ENCODE measurements at regions of chr1 and their contacts with region 1.

Region 1: GRCh38 chr1:244918421-244919319 is 54.3 kb upstream of the HNRNPU start:
- DNase-seq: peak; percentile 26 to 73 (median 51)
- ATAC-seq: peak in 3 of 4 donors; percentile 88 to 93 (median 92)
- H3K4me3 ChIP-seq: peak overlapping the region; percentile 31 to 67 (median 58)
- H3K27ac ChIP-seq: peak overlapping the region in 10 of 12 donors; percentile 21 to 78 (median 52)
- H3K4me1 ChIP-seq: peaks cover 0 to 22% (median 12%) of the 10 kb centered on the region in 12 donors
- H3K27me3 ChIP-seq: no peaks in the 10 kb centered on the region
- CTCF ChIP-seq: peak in 7 of 12 donors; percentile 6 to 44 (median 18)
- POLR2A ChIP-seq: no peak

Region 2: DNA sequence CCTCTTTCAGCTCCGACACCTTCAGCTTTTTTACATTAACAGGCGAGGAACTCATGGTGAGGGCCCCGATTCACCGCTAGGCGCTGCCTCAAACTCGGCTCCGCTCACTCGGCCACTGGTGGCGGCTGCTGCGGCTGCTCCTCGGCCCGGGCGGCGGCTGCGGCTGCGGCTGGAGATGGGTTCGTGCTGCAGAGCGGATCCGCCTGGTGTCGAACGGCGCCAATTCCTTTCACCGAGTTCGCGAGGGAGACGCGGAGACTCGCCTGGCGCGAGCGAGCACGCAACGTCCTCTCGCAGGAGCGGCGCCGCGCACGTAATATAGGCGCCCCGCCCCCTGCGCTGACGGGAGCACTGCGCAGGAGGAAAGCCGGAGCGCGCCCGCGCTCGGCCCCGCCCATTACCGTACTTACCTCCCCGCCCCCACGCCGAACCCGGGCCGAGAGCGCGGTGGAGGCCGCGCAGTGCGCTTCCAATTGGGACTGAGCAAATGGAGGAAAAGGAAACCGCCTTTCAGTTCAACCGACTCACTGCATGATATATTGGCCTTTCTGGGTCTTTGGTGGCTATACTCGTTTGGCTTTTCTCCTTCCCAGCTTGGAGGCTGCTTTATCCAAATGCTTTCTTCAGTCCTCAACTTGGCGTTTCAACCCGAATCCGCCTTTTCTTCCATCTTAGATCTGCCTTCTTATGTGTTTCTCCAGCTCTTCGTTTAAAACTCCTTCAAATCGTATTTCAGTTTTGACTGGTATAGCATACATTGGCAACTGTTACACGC is 54.2 kb before region 1 on chr1 and contains the start of gene HNRNPU:
- intact Hi-C with region 1: loop called in 4 of 10 experiments (anchors 5 kb)
- DNase-seq: peak; percentile 97 to 99 (median 98)
- ATAC-seq: peak; percentile 89 to 96 (median 93)
- H3K4me3 ChIP-seq: peak within 1 kb of the TSS; percentile 88 to 100 (median 96)
- H3K27ac ChIP-seq: peak within 1 kb of the TSS; percentile 94 to 100 (median 100)
- H3K4me1 ChIP-seq: peaks cover 5 to 47% (median 40%) of the 10 kb centered on the region in 12 donors
- H3K27me3 ChIP-seq: no peaks in the 10 kb centered on the region
- CTCF ChIP-seq: peak in 7 of 12 donors; percentile 5 to 38 (median 32)
- POLR2A ChIP-seq: peak; percentile 75 to 97
- total RNA-seq, gene HNRNPU: 138 to 218 (median 169) TPM

Region 3: GRCh38 chr1:244874974-244875579 is 43.6 kb before region 1 on chr1:
- intact Hi-C with region 1: loop called in 1 of 10 experiments (anchors 10 kb)
- DNase-seq: no peak
- ATAC-seq: no peak
- H3K4me3 ChIP-seq: no peak overlapping the region
- H3K27ac ChIP-seq: no peak overlapping the region
- H3K4me1 ChIP-seq: no peaks in the 10 kb centered on the region
- H3K27me3 ChIP-seq: no peaks in the 10 kb centered on the region
- CTCF ChIP-seq: no peak
- POLR2A ChIP-seq: no peak

Region 4: GRCh38 chr1:244964112-244964971 is 45.7 kb after region 1 on chr1:
- intact Hi-C with region 1: loop called in 2 of 10 experiments (anchors 2 to 5 kb)
- DNase-seq: peak in 1 of 5 donors; percentile 24
- ATAC-seq: peak in 2 of 4 donors; percentile 31 to 35
- H3K4me3 ChIP-seq: peak overlapping the region in 2 of 12 donors; percentile 12 to 16
- H3K27ac ChIP-seq: peak overlapping the region; percentile 33 to 77 (median 56)
- H3K4me1 ChIP-seq: peaks cover 3 to 52% (median 30%) of the 10 kb centered on the region in 12 donors
- H3K27me3 ChIP-seq: no peaks in the 10 kb centered on the region
- CTCF ChIP-seq: no peak
- POLR2A ChIP-seq: no peak

Region 5: GRCh38 chr1:244970661-244971551 is 52.2 kb after region 1 on chr1:
- intact Hi-C with region 1: loop called in 1 of 10 experiments (anchors 5 kb)
- DNase-seq: peak; percentile 93 to 97 (median 95)
- ATAC-seq: peak; percentile 80 to 93 (median 90)
- H3K4me3 ChIP-seq: peak overlapping the region; percentile 68 to 95 (median 76)
- H3K27ac ChIP-seq: peak overlapping the region; percentile 97 to 100 (median 99)
- H3K4me1 ChIP-seq: peaks cover 0 to 24% (median 17%) of the 10 kb centered on the region in 12 donors
- H3K27me3 ChIP-seq: no peaks in the 10 kb centered on the region
- CTCF ChIP-seq: peak; percentile 43 to 83 (median 58)
- POLR2A ChIP-seq: peak in 1 of 2 donors; percentile 58

Measured in heart left ventricle (tissue), 16 donors.